A549 (cell line): ENCODE measurements at regions of chr1 and their contacts with region 1.

Region 1: DNA sequence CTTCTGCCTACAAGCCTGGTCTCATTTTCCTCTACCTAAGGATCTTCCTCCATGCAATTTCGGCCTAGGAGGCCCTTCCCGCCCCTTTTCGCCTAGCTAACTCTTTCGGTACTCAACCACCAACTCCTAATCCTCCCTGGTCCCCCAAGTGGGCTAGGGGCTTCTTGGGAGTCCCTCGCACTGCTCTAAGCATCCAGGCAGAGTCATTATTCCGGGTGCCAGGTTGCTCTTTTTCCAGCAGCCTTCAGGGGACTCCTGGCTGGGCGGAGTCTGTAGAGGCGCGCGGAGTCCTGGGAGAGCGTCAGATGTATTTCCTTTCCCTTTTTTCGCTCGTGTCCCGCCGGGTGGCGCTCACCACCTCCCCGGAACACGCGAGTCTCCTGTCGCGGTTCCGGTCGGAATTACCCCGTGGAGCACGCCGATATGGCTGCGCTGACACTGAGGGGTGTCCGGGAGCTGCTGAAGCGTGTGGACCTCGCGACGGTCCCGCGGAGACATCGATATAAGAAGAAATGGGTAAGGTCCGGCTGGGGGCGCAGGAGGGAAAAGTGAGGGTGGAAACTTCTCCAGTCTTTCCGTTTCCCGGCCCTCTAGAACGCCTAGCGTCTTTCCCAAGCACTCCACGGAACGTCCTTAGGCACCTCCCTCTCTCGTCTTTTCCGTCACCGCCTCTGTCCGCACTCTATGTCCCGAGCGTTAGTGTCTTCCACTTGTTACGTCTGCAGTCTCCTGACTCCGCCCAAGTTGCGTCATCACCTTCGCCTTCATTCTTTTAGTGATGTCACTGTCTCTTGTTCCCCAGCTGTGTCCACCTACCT is at the start of gene NSUN4:
- DNase-seq: peak; percentile 81 to 92
- ATAC-seq: peak; percentile 90 to 93
- H3K4me3 ChIP-seq: peak within 1 kb of the TSS; percentile 63
- H3K27ac ChIP-seq: peak within 1 kb of the TSS; percentile 92 to 94
- H3K4me1 ChIP-seq: peaks cover 14% of the 10 kb centered on the region
- CTCF ChIP-seq: peak; percentile 55
- EP300 ChIP-seq: no peak
- POLR2A ChIP-seq: peak; percentile 68
- RAD21 ChIP-seq: no peak
- polyA plus RNA-seq, gene NSUN4: 23.3 and 30.2 TPM in 2 replicates

Region 2: DNA sequence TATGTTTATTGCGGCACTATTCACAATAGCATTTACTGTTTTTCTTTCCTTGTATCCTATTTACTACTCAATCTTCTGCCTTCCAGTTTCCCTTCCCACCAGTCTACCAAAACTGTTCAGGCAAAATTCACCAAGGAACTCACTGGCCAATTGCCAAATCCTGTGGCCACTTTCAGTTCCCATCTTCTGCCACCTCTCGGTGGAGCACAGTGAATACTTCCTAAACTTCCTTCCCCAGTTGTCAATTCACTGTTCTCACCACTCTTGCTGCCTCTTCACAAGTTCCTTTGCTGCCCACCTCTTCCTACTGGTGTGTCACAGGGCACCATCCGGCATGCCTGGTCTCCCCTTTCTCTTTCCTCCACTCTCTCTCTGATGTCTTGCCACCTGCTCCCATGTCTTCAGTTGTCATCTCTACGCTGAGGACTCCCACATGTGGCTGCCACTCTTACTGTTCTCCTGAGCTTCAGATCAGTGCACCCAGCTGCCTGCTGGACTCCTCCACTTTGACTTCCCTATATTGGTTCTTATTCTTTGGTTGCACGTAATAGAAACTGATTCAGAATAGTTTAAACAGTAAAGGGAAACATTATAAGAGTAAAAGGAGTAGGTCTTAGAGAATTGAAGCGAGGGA is 322.6 kb before region 1 on chr1:
- CTCF ChIA-PET with region 1: no interaction called
- POLR2A ChIA-PET with region 1: no interaction called
- DNase-seq: no peak
- ATAC-seq: no peak
- H3K4me3 ChIP-seq: no peak overlapping the region
- H3K27ac ChIP-seq: no peak overlapping the region
- H3K4me1 ChIP-seq: no peaks in the 10 kb centered on the region
- CTCF ChIP-seq: no peak
- EP300 ChIP-seq: no peak
- POLR2A ChIP-seq: no peak
- RAD21 ChIP-seq: no peak

Region 3: DNA sequence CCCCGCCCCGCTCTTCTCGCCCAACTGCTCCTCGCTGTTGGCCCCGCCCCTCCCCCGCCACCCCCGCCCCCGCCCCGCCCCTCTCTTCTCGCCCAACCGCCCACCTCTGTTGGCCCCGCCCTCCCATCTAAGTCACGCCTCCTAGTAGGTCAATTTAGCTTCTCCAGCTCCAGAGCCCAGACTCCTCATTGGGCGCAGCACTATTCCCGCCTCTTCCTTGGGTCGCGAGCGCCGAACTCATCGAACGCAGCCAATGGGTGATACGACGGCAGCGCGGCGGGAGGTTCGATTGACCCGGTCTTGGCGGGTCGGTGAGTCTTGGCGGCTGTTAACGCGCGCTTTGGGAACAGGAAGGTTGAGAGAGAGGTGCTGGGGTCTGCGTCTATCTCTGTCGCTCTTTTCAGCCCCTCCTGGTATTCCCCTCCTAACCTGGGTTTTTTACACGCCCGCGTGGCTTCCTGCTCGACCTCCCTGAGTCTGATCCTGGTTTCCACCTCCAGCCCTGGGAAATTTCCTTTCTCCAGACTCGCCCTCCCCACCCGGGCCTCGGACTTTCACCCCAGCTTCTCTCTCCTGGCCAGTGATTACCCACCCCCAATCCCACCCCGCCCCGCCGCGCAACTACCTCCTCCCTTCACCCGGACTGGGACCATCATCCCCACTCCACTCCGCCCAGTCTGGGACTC is 93.0 kb before region 1 on chr1 and contains the start of gene RAD54L:
- CTCF ChIA-PET with region 1: interaction called, 3 read pairs
- POLR2A ChIA-PET with region 1: interaction called, 21 read pairs
- DNase-seq: peak; percentile 94 to 98
- ATAC-seq: peak; percentile 93 to 95
- H3K4me3 ChIP-seq: peak within 1 kb of the TSS; percentile 80
- H3K27ac ChIP-seq: peak within 1 kb of the TSS; percentile 75 to 91
- H3K4me1 ChIP-seq: peaks cover 12% of the 10 kb centered on the region
- CTCF ChIP-seq: no peak
- EP300 ChIP-seq: no peak
- POLR2A ChIP-seq: peak; percentile 28; the same call in 1 of the 2 replicates
- RAD21 ChIP-seq: no peak
- polyA plus RNA-seq, gene RAD54L: 10.0 and 10.9 TPM in 2 replicates

Region 4: DNA sequence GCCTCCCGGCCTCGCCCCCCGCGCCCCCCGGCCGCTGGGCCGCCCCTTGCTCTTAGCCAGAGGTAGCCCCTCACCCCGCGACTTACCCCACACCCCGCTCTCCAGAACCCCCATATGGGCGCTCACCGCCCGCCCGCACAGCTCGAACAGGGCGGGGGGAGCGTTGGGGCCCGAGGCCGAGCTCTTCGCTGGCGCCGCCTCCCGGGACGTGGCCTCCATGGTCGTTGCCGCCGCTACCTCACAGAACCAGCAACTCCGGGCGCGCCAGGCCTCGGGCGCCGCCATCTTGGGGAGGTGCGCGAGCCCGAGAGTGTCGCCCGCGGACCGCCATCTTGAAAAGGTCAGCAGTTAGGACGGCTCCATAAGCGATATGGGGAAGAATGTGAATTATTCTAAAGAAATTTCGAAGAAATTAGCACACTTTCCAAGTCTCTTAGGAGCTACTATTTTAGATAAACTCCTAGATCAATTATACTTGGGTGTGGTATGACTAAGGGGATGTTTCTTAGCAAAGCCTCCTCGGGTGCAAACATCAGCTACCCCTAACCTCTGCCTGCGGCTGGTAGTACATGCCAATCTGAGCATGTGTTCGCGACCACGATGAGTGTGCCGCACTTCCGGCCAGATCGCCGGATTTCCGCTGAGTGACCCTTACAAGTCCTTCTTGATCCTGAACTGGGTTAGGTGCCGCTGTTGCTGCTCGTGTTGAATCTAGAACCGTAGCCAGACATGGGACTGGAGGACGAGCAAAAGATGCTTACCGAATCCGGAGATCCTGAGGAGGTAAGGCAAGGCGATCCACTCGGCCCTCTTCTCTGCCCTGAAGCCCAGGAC is 37.4 kb before region 1 on chr1 and contains the starts of genes LRRC41 and UQCRH:
- CTCF ChIA-PET with region 1: interaction called, 5 read pairs
- POLR2A ChIA-PET with region 1: interaction called, 14 read pairs
- DNase-seq: peak; percentile 79 to 98
- ATAC-seq: peak; percentile 87 to 91
- H3K4me3 ChIP-seq: peak within 1 kb of the TSS; percentile 84
- H3K27ac ChIP-seq: peak within 1 kb of the TSS; percentile 98 to 99
- H3K4me1 ChIP-seq: peaks cover 28% of the 10 kb centered on the region; the same call in 2 of the 3 replicates
- CTCF ChIP-seq: no peak
- EP300 ChIP-seq: no peak
- POLR2A ChIP-seq: peak; percentile 83
- RAD21 ChIP-seq: no peak
- polyA plus RNA-seq, gene LRRC41: 28.6 and 32.5 TPM in 2 replicates
- polyA plus RNA-seq, gene UQCRH: 514 and 762 TPM in 2 replicates

Region 5: GRCh38 chr1:46735708-46736324 is 395.2 kb after region 1 on chr1:
- CTCF ChIA-PET with region 1: no interaction called
- POLR2A ChIA-PET with region 1: no interaction called
- DNase-seq: peak in 1 of 2 experiments; percentile 46
- ATAC-seq: peak; percentile 56 to 71; a peak in 5 of 6 replicates
- H3K4me3 ChIP-seq: no peak overlapping the region
- H3K27ac ChIP-seq: no peak overlapping the region
- H3K4me1 ChIP-seq: no peaks in the 10 kb centered on the region
- CTCF ChIP-seq: no peak; the same call in 2 of the 3 replicates
- EP300 ChIP-seq: no peak
- POLR2A ChIP-seq: no peak
- RAD21 ChIP-seq: no peak; a peak in 1 of 5 replicates